Caco-2 (cell line): ENCODE measurements at regions of chr10 and their contacts with region 1.

Region 1: DNA sequence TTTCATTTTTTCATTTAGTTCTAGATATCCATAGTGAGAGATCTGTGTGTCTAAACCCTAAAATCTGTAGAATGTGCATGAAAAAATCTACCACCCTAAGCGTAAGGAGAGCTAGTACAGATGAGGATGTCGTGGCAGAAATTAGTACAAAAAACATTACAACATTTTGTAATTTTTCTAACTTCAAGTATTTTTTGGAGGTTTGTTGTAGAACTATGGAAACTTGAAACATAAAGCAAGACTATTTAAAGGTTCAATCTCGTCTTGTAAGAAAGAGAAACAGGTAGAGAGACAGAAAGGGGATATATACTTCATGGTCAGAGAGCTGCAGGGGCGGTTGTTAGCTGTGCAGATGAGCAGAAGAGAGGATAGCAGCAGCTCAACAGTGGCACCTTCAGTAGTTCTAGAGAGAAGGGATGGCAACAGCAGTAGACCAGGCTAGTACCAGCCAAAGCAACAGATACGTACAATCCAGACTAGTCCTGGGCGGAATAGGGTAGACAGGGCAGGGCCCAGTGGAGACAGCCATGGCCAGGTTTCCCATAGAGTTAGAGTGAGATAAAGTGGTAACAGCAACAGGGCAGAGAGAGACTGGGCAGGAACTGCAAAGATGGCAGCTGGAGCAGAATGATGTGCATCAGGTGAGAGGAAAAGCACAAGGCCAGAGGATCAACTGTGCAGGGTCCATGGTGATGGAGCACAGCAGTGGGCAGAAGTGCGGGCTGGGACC is 145.2 kb downstream of the FRMD4A start:
- DNase-seq: peak; percentile 92 to 96
- H3K4me3 ChIP-seq: no peak overlapping the region; the same call in 1 of the 2 replicates
- H3K4me3 Mint-ChIP-seq: peak overlapping the region; percentile 73
- H3K27ac Mint-ChIP-seq: peak overlapping the region; percentile 99
- H3K4me1 ChIP-seq: peaks cover 15% of the 10 kb centered on the region
- H3K4me1 Mint-ChIP-seq: peaks cover 30% of the 10 kb centered on the region
- H3K27me3 ChIP-seq: no peaks in the 10 kb centered on the region
- H3K27me3 Mint-ChIP-seq: peaks cover 4% of the 10 kb centered on the region
- CTCF ChIP-seq: no peak

Region 2: DNA sequence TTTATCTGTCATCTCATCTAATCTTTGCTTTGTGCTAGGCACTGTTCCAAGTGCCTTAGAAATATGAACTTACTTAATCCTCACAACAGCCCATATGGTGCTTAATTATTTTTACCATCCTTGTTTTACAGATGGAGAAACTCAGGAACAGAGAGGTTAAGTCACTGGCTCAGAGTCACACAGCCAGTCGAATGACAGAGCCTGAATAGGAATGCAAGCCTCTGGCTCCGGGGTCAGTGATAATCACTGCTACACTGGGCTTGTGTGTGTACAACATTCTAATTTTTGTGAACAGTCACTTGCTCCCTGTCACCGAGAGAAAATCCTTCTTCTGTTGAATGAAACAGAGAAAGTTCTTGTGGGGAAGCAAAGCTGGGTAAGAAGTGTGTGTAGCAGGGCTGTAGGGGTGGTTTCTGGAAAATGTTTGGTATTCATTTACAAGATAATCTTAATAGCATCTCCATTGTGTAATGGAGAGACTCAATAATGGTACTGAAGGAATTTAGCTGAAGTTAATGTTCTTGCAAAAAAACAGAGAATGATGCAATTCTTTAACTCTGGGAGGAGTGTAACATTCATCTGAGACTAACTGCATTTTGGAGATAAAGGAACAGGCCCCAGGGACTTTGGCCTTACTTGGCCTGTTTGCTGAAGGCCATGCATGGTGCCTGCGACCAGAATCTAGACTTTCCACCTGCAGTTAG is 145.4 kb before region 1 on chr10:
- CTCF ChIA-PET with region 1: no interaction called
- POLR2A ChIA-PET with region 1: interaction called, 24 read pairs
- intact Hi-C with region 1: loop called (anchors 2 kb)
- DNase-seq: peak; percentile 79 to 84
- H3K4me3 ChIP-seq: no peak overlapping the region
- H3K4me3 Mint-ChIP-seq: peak overlapping the region; percentile 29
- H3K27ac Mint-ChIP-seq: peak overlapping the region; percentile 83
- H3K4me1 ChIP-seq: peaks cover 39% of the 10 kb centered on the region
- H3K4me1 Mint-ChIP-seq: peaks cover 35% of the 10 kb centered on the region
- H3K27me3 ChIP-seq: no peaks in the 10 kb centered on the region
- H3K27me3 Mint-ChIP-seq: no peaks in the 10 kb centered on the region
- CTCF ChIP-seq: no peak

Region 3: DNA sequence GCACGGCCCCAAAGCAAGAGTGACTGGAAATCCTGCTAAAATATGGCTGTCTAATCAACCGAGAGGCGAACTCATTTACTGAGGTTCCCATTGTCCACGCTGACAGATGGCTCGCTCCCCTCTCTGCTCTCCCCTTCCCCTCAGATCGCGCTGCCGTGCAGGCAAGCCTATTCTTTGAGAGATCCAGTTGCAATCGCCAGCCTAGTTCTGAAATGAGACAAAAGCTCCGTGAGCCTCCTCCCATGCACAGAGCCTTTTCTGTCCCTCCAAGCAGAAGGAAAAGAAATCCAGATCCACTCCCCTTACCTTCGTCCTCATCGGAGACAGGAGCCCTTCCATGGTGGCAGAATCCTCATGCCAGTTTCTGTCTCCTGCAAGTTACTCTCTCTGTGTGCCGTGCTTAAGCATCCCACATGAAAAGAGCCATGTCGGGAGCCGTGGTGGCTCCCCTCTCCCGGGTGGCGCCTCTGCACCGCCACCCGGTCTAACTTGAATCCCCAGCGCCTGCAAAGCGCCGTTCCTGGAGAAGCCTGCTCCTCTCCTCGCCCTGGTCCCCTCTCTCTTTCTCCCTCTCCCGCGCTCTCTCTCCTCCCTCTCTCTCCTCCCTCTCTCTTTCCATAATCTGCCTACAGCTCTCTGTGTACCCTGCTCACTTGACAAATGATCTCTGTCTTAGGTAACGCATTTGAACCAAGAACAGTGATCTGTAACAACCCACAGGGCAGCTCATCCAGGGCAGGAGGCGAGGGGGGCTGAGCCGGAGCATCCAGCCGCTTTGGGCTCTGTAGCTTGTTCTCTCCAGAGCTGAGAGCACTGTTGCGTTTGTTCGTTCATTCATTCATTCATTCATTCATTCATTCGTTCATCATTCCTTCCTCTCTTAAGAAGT is 11.5 kb before region 1 on chr10:
- CTCF ChIA-PET with region 1: interaction called, 11 read pairs
- POLR2A ChIA-PET with region 1: interaction called, 36 read pairs
- intact Hi-C with region 1: no loop called
- DNase-seq: peak; percentile 45 to 62
- H3K4me3 ChIP-seq: peak overlapping the region; percentile 50
- H3K4me3 Mint-ChIP-seq: peak overlapping the region; percentile 74
- H3K27ac Mint-ChIP-seq: peak overlapping the region; percentile 14
- H3K4me1 ChIP-seq: 0 out of 2 replicates have a peak, but pooled peaks cover 5% of the 10 kb centered on the region
- H3K4me1 Mint-ChIP-seq: peaks cover 4% of the 10 kb centered on the region
- H3K27me3 ChIP-seq: no peaks in the 10 kb centered on the region
- H3K27me3 Mint-ChIP-seq: peaks cover 15% of the 10 kb centered on the region
- CTCF ChIP-seq: no peak

Region 4: DNA sequence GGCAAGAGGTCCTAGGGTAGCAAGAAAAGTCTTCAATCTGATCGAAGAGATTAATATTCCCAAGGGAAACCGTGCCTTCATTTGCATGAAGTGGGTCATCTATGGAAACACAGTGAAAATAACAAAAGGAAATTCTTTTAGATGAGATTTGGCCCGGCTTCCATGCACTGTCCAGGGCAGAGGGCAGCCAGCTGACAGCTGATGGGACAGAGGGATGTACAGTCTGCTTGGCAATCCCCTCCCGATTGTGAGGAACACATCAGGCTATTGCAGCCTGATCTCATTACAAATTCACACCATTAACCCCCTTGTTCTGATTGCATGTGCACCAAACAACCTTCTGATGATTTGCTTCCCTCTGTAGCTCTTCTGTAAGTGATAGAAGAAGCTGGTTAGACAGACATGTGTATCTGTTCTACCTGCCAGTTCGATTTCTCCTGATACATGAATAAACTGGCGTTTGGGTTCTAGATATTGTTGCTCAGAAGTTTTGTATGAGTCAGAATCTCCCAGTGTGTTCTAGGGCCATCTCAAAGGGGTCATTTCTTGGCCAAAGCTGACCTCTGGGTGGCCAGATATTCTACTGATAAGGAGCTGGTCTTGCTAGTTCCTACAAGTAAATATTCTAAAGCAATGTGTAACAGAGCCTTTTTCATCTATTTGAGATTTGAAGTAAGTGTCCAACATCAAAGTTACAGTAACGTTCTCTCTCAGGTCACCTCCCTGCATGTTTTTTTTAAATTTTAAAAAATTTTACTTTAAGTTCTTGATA is 40.1 kb after region 1 on chr10:
- CTCF ChIA-PET with region 1: interaction called, 6 read pairs
- POLR2A ChIA-PET with region 1: interaction called, 26 read pairs
- intact Hi-C with region 1: loop called (anchors 2 kb)
- DNase-seq: peak; percentile 26 to 51
- H3K4me3 ChIP-seq: no peak overlapping the region
- H3K4me3 Mint-ChIP-seq: no peak overlapping the region
- H3K27ac Mint-ChIP-seq: peak overlapping the region; percentile 12
- H3K4me1 ChIP-seq: peaks cover 46% of the 10 kb centered on the region
- H3K4me1 Mint-ChIP-seq: peaks cover 34% of the 10 kb centered on the region
- H3K27me3 ChIP-seq: no peaks in the 10 kb centered on the region
- H3K27me3 Mint-ChIP-seq: no peaks in the 10 kb centered on the region
- CTCF ChIP-seq: no peak

Region 5: GRCh38 chr10:14296065-14296709 is 110.7 kb after region 1 on chr10:
- CTCF ChIA-PET with region 1: interaction called, 4 read pairs
- POLR2A ChIA-PET with region 1: interaction called, 18 read pairs
- intact Hi-C with region 1: loop called (anchors 1 kb)
- DNase-seq: peak; percentile 90 to 94
- H3K4me3 ChIP-seq: no peak overlapping the region
- H3K4me3 Mint-ChIP-seq: peak overlapping the region; percentile 38
- H3K27ac Mint-ChIP-seq: peak overlapping the region; percentile 91
- H3K4me1 ChIP-seq: peaks cover 26% of the 10 kb centered on the region
- H3K4me1 Mint-ChIP-seq: peaks cover 25% of the 10 kb centered on the region
- H3K27me3 ChIP-seq: no peaks in the 10 kb centered on the region
- H3K27me3 Mint-ChIP-seq: no peaks in the 10 kb centered on the region
- CTCF ChIP-seq: no peak

Region 6: DNA sequence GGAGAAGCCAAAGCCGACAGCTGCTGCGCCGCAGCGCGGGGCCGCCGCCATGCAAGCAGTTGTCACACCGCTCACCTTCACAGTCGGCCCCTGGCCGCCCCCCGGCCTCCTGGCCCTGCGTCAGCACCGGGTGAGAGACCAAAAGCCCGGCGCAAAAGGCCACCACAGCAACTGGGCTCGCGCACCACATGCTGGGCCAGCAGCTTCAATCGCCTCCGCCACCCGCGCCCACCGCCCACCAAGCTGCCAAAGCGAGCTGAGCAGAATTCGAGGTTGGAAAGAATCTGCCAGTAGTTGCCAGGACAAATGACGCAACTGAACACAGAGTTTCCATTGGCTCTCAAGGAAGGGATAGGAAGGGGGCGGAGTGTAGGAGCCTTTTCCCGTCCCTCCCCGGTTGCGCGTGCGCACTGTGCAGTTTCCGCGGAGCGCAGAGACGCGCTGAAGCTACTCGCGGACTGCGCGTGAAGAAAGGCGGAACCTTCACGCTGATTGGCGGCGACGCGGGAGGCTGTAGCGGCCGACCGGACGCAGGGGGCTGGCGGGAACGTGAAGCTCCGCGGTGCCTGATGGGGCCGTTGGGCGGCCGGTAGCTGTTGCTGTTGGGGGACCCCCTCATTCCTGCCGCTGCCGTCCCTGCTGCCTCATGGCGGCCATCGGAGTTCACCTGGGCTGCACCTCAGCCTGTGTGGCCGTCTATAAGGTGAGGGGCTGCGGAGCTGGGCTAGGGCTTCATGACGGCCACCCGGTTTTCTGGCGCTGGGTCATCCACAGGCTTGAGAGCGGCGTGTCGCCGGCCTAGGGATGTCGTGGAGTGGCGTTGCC is 652.5 kb after region 1 on chr10 and contains the starts of genes CDNF, HSPA14 and MSANTD7:
- CTCF ChIA-PET with region 1: no interaction called
- POLR2A ChIA-PET with region 1: interaction called, 11 read pairs
- intact Hi-C with region 1: no loop called
- DNase-seq: peak; percentile 100
- H3K4me3 ChIP-seq: peak within 1 kb of the TSS; percentile 91
- H3K4me3 Mint-ChIP-seq: peak within 1 kb of the TSS; percentile 70
- H3K27ac Mint-ChIP-seq: peak within 1 kb of the TSS; percentile 91
- H3K4me1 ChIP-seq: no peaks in the 10 kb centered on the region; the same call in 1 of the 2 replicates
- H3K4me1 Mint-ChIP-seq: peaks cover 15% of the 10 kb centered on the region
- H3K27me3 ChIP-seq: no peaks in the 10 kb centered on the region
- H3K27me3 Mint-ChIP-seq: no peaks in the 10 kb centered on the region
- CTCF ChIP-seq: no peak
- total RNA-seq, gene CDNF: 3.4 and 3.9 TPM in 2 replicates
- total RNA-seq, gene HSPA14: 36.9 and 39.3 TPM in 2 replicates
- total RNA-seq, gene MSANTD7: 30.0 and 32.8 TPM in 2 replicates